Thyroid gland (tissue), 4 donors: ENCODE measurements at regions of chr10 and their contacts with region 1.

Region 1: GRCh38 chr10:96642973-96643372 is 56.2 kb upstream of the TM9SF3 start:
- DNase-seq: peak; percentile 66 to 75
- H3K4me3 ChIP-seq: no peak overlapping the region
- H3K27ac ChIP-seq: no peak overlapping the region
- H3K4me1 ChIP-seq: peaks cover 0 to 7% of the 10 kb centered on the region in 2 donors
- H3K27me3 ChIP-seq: no peaks in the 10 kb centered on the region
- CTCF ChIP-seq: peak in 4 of 6 experiments; percentile 29 to 53 (median 50)
- POLR2A ChIP-seq: no peak

Region 2: GRCh38 chr10:97025613-97026242 is 382.8 kb after region 1 on chr10:
- intact Hi-C with region 1: loop called (anchors 10 kb)
- DNase-seq: peak; percentile 53 to 65
- H3K4me3 ChIP-seq: no peak overlapping the region
- H3K27ac ChIP-seq: no peak overlapping the region
- H3K4me1 ChIP-seq: no peaks in the 10 kb centered on the region
- H3K27me3 ChIP-seq: no peaks in the 10 kb centered on the region
- CTCF ChIP-seq: peak; percentile 29 to 62 (median 52)
- POLR2A ChIP-seq: no peak